ENCODE measurements at regions of chr1 and their contacts with region 1.

Region 1: DNA sequence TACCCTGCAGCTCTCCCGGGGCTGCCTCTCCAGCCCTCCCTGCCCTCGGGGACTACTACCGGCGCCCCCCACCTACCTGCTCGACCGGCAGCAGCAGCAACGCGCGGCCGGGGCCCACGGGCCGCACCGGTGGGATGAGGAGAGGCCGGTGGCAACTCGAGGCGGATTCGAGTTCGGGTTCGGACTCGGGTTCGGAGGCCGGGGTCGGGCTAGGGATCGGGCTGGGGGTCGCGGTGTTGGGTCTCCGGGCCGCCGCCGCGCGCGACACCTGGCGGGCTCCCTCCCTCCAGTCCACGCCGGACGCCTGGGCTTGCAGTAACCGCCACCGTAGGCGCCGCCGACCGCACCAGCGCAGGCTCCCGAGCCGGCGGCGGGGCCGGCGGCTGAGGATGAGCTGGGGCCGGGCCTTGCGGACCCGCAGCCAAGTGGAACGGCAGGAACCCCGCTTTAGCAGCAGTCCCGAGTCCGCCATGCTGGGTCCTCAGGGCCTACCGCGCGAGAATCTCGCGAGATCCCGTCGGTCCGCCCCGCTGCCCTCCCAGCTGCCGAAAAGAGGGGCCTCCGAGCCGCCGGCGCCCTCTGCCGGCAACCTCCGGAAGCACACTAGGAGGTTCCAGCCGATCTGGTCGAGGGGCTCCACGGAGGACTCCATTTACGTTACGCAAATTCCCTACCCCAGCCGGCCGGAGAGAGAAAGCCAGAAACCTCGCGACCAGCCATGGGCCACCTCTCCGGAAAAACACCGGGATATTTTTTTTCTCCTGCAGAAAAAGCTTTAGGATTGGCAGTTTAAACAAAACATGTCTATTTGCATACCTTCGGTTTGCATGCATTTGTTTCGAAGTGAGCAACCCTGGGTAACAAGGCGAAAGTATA is at the start of gene NOL9:
- DNase-seq: peak; percentile 91 to 98 (median 94)
- ATAC-seq: peak; percentile 99
- H3K4me3 ChIP-seq: peak within 1 kb of the TSS; percentile 91 to 92
- H3K4me3 Mint-ChIP-seq: peak within 1 kb of the TSS; percentile 77
- H3K27ac ChIP-seq: peak within 1 kb of the TSS; percentile 43 to 81
- H3K27ac Mint-ChIP-seq: peak within 1 kb of the TSS; percentile 75
- H3K4me1 ChIP-seq: peaks cover 20% of the 10 kb centered on the region
- H3K4me1 Mint-ChIP-seq: peaks cover 15% of the 10 kb centered on the region
- H3K27me3 ChIP-seq: no peaks in the 10 kb centered on the region
- H3K27me3 Mint-ChIP-seq: no peaks in the 10 kb centered on the region
- CTCF ChIP-seq: peak; percentile 88
- total RNA-seq, gene NOL9: 67.9 to 71.8 TPM

Region 2: DNA sequence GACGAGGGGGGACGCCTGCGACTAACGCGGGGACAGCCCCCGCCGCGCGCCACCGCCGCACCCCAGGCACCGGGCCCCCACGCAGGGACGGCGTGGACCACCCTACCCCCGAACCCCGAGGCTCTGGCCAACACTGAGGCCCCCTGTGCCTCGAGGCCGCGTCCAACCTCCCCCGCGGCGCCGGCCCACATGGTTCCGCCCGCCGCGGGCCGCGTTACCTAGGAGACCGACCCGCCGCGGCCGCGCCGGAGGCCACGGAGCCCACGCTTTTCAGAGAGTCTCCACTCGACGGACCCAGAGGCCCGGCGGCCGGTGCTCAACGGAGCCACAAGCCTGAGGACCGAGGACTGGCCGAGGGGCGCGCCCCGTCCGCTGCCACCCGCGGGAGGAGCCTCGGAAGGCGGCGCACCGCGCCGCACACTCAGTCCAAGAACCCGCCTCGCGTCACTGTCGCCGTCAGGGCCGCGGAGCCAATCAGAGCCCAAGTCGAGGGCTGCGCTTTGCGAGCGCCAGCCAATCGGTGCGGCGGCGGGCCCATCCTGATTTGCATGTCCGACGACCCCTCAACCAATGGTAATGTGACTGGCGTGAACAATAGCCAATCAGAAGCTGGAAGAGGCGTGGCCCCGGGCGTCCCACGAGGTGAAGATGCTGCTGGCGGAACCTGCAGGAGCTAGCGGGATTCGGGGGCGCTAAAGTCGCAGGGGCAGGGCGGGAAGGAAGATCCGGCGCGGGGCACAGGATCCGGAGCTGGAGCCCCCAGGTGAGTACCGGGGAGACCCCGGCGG is 562.0 kb before region 1 on chr1 and contains the start of gene NPHP4:
- CTCF ChIA-PET with region 1: no interaction called
- POLR2A ChIA-PET with region 1: no interaction called
- intact Hi-C with region 1: loop called in 1 of 2 experiments (anchors 10 kb)
- DNase-seq: peak; percentile 98 to 100 (median 99)
- ATAC-seq: peak; percentile 86
- H3K4me3 ChIP-seq: peak within 1 kb of the TSS; percentile 64 to 87
- H3K4me3 Mint-ChIP-seq: peak within 1 kb of the TSS; percentile 96
- H3K27ac ChIP-seq: peak within 1 kb of the TSS; percentile 90 to 99
- H3K27ac Mint-ChIP-seq: peak within 1 kb of the TSS; percentile 93
- H3K4me1 ChIP-seq: peaks cover 35% of the 10 kb centered on the region
- H3K4me1 Mint-ChIP-seq: peaks cover 33% of the 10 kb centered on the region
- H3K27me3 ChIP-seq: no peaks in the 10 kb centered on the region
- H3K27me3 Mint-ChIP-seq: no peaks in the 10 kb centered on the region
- CTCF ChIP-seq: no peak
- total RNA-seq, gene NPHP4: 3.1 to 3.7 TPM

Region 3: GRCh38 chr1:6489799-6490180 is 64.5 kb before region 1 on chr1:
- CTCF ChIA-PET with region 1: interaction called, 55 read pairs
- POLR2A ChIA-PET with region 1: interaction called, 11 read pairs
- intact Hi-C with region 1: loop called (anchors 1 kb)
- DNase-seq: peak; percentile 46 to 87 (median 76)
- ATAC-seq: peak; percentile 60
- H3K4me3 ChIP-seq: peak overlapping the region; percentile 69 to 94
- H3K4me3 Mint-ChIP-seq: peak overlapping the region; percentile 76
- H3K27ac ChIP-seq: no peak overlapping the region
- H3K27ac Mint-ChIP-seq: no peak overlapping the region
- H3K4me1 ChIP-seq: peaks cover 34% of the 10 kb centered on the region
- H3K4me1 Mint-ChIP-seq: peaks cover 23% of the 10 kb centered on the region
- H3K27me3 ChIP-seq: peaks cover 7 to 15% of the 10 kb centered on the region in 2 experiments
- H3K27me3 Mint-ChIP-seq: peaks cover 11% of the 10 kb centered on the region
- CTCF ChIP-seq: peak; percentile 99

Region 4: DNA sequence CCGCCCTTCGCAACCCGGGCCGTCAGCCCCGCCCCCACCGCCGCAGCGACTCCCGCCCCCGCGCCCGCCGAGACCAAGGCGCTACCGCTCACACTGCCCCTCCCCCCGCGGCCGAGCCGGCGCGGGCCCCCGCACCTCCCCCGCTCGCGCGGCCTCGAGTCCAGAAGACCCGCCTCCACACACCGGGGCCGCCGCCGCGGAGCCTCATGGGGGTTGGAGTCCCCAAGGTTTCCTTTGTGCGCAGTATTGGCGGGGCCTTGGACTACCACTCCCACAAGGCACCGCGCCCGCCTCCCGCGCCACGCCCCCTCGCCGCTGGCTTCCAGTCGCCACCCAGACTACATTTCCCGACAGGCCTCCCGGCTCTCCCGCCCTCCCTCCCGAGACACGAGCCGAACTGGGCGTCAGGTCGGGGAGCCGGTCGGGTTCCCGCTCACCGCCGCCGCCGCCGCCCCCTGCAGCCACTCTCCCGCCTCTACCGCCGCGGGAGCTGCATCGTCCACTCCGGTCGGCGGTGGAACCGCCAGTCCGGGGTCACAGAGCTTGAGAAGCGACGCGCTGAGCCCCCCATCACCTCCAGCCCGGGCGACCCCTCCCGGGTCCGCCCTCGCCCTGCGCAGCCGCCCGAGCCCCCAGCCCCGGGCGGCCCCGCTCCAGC is 59.2 kb after region 1 on chr1 and contains the start of gene PHF13:
- CTCF ChIA-PET with region 1: interaction called, 5 read pairs
- POLR2A ChIA-PET with region 1: no interaction called
- intact Hi-C with region 1: loop called in 1 of 2 experiments (anchors 1 kb)
- DNase-seq: peak; percentile 98 to 100 (median 99)
- ATAC-seq: peak; percentile 93
- H3K4me3 ChIP-seq: peak within 1 kb of the TSS; percentile 70 to 72
- H3K4me3 Mint-ChIP-seq: peak within 1 kb of the TSS; percentile 90
- H3K27ac ChIP-seq: peak within 1 kb of the TSS; percentile 9 to 55
- H3K27ac Mint-ChIP-seq: peak within 1 kb of the TSS; percentile 86
- H3K4me1 ChIP-seq: peaks cover 18% of the 10 kb centered on the region
- H3K4me1 Mint-ChIP-seq: peaks cover 31% of the 10 kb centered on the region
- H3K27me3 ChIP-seq: no peaks in the 10 kb centered on the region
- H3K27me3 Mint-ChIP-seq: no peaks in the 10 kb centered on the region
- CTCF ChIP-seq: no peak
- total RNA-seq, gene PHF13: 3.3 to 3.5 TPM

Region 5: GRCh38 chr1:6634371-6635052 is 80.2 kb after region 1 on chr1:
- CTCF ChIA-PET with region 1: interaction called, 14 read pairs
- POLR2A ChIA-PET with region 1: interaction called, 7 read pairs
- intact Hi-C with region 1: no loop called
- DNase-seq: peak in 8 of 9 experiments; percentile 24 to 66 (median 50)
- ATAC-seq: peak; percentile 64
- H3K4me3 ChIP-seq: no peak overlapping the region
- H3K4me3 Mint-ChIP-seq: no peak overlapping the region
- H3K27ac ChIP-seq: no peak overlapping the region
- H3K27ac Mint-ChIP-seq: no peak overlapping the region
- H3K4me1 ChIP-seq: no peaks in the 10 kb centered on the region
- H3K4me1 Mint-ChIP-seq: peaks cover under 1% of the 10 kb centered on the region
- H3K27me3 ChIP-seq: no peaks in the 10 kb centered on the region
- H3K27me3 Mint-ChIP-seq: no peaks in the 10 kb centered on the region
- CTCF ChIP-seq: peak; percentile 29

Region 6: GRCh38 chr1:6701437-6702153 is 147.3 kb after region 1 on chr1 and contains the start of gene DNAJC11:
- CTCF ChIA-PET with region 1: interaction called, 3 read pairs
- POLR2A ChIA-PET with region 1: no interaction called
- intact Hi-C with region 1: loop called (anchors 1 kb)
- DNase-seq: peak; percentile 82 to 96 (median 89)
- ATAC-seq: peak; percentile 96
- H3K4me3 ChIP-seq: peak within 1 kb of the TSS; percentile 79 to 87
- H3K4me3 Mint-ChIP-seq: peak within 1 kb of the TSS; percentile 94
- H3K27ac ChIP-seq: peak within 1 kb of the TSS; percentile 68 to 70
- H3K27ac Mint-ChIP-seq: peak within 1 kb of the TSS; percentile 95
- H3K4me1 ChIP-seq: peaks cover 11% of the 10 kb centered on the region
- H3K4me1 Mint-ChIP-seq: peaks cover 25% of the 10 kb centered on the region
- H3K27me3 ChIP-seq: no peaks in the 10 kb centered on the region
- H3K27me3 Mint-ChIP-seq: no peaks in the 10 kb centered on the region
- CTCF ChIP-seq: peak; percentile 89
- total RNA-seq, gene DNAJC11: 23.3 to 24.4 TPM

Region 7: GRCh38 chr1:8448911-8449661 is 1894.8 kb after region 1 on chr1:
- CTCF ChIA-PET with region 1: no interaction called
- POLR2A ChIA-PET with region 1: no interaction called
- intact Hi-C with region 1: no loop called
- DNase-seq: no peak
- ATAC-seq: peak; percentile 44
- H3K4me3 ChIP-seq: no peak overlapping the region
- H3K4me3 Mint-ChIP-seq: no peak overlapping the region
- H3K27ac ChIP-seq: no peak overlapping the region
- H3K27ac Mint-ChIP-seq: no peak overlapping the region
- H3K4me1 ChIP-seq: peaks cover 10% of the 10 kb centered on the region
- H3K4me1 Mint-ChIP-seq: peaks cover 11% of the 10 kb centered on the region
- H3K27me3 ChIP-seq: no peaks in the 10 kb centered on the region
- H3K27me3 Mint-ChIP-seq: no peaks in the 10 kb centered on the region
- CTCF ChIP-seq: no peak